Panc1 (cell line): ENCODE measurements at regions of chr19 and their contacts with region 1.

Region 1: DNA sequence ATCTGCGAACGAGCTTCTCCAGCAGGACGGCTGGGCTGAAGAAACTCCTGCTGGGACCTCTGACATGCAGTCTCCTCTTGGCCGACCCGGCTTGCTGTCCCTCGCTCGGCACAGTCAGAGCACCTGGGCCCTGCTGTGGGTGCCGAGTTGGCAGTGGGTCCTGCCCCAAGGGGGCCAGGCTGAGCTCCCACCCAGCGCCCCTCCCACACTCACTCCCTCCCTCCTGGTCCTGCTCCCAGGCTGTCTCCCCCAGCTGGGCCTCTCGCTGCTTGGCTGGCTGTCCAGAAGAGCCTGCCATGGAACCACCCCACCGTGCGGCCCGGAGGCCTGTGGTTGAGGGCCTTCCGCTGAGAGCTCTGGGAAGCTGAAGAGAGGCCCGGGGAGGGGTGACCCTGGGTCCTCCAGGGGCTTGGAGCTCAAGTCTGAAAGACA is 6.0 kb downstream of the AKT2 start:
- DNase-seq: no peak
- ATAC-seq: no peak
- H3K4me3 ChIP-seq: no peak overlapping the region
- H3K27ac ChIP-seq: no peak overlapping the region
- H3K4me1 ChIP-seq: peaks cover 67% of the 10 kb centered on the region
- H3K27me3 ChIP-seq: no peaks in the 10 kb centered on the region
- CTCF ChIP-seq: no peak

Region 2: GRCh38 chr19:39057615-39058014 is 1221.5 kb before region 1 on chr19:
- CTCF ChIA-PET with region 1: no interaction called
- POLR2A ChIA-PET with region 1: interaction called, 14 read pairs
- in situ Hi-C with region 1: no loop called
- intact Hi-C with region 1: no loop called
- DNase-seq: no peak
- ATAC-seq: no peak
- H3K4me3 ChIP-seq: no peak overlapping the region
- H3K27ac ChIP-seq: 0 out of 2 replicates have a peak overlapping the region, but pooled peaks have one; percentile 0
- H3K4me1 ChIP-seq: no peaks in the 10 kb centered on the region
- H3K27me3 ChIP-seq: no peaks in the 10 kb centered on the region
- CTCF ChIP-seq: no peak

Region 3: DNA sequence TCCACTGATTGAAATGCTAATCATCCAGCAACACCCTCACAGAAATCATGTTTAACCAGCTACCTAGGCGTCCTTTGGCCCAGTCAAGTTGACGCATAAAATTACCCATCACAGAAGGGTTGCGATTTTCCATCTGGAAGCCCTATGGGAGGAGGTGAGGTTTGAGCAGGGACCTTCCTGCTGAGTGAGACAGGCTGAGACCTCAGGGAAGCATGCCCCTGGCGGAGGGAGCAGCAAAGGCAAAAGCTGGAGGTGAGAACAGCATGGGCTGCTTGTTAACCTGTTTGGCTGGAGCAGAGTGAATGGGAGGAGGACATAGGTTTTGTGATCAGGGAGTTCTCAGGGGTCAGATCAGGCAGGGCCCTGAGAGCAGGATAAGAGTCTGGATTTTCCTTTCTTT is 68.2 kb before region 1 on chr19:
- CTCF ChIA-PET with region 1: no interaction called
- POLR2A ChIA-PET with region 1: interaction called, 11 read pairs
- in situ Hi-C with region 1: no loop called
- intact Hi-C with region 1: no loop called
- DNase-seq: no peak
- ATAC-seq: 0 out of 2 replicates have a peak, but pooled peaks have one; percentile 2
- H3K4me3 ChIP-seq: no peak overlapping the region
- H3K27ac ChIP-seq: no peak overlapping the region
- H3K4me1 ChIP-seq: no peaks in the 10 kb centered on the region
- H3K27me3 ChIP-seq: no peaks in the 10 kb centered on the region
- CTCF ChIP-seq: no peak

Region 4: DNA sequence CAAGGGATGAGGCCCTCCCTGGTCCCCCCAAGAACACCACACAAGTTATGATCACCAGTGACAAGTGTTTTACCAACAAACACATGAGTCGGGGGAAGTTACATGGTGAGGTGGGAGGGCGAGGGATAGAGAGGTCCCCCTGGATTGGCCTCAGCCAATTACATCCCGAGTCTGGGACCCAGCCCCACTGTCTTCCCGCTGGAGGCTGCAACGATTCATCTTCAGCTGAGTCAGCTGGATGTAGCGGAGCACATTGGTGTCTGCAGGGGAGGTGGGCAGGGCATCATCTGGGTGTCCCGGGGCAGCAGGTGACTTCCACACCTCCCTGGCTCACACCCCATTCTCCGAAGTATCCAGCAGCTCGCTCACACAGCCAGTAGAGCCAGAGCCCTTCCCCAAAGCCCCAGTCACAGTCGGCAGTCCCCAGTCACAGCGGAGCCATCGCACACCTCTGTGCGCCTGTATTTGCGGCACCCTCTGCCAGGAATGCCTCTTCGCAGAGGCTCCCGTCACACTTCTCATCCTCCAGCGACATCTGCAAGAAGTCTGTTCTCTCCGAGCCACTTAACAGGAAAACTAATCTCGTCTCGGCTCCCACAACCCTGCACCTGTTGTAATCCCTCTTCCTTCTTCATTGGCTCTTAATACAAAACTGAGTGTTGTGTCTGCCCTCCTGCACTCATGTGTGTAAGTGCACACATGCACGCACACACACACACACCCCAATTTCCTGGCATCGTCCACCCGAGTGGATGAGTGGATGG is 62.9 kb before region 1 on chr19:
- CTCF ChIA-PET with region 1: interaction called, 8 read pairs
- POLR2A ChIA-PET with region 1: interaction called, 18 read pairs
- in situ Hi-C with region 1: no loop called
- intact Hi-C with region 1: no loop called
- DNase-seq: no peak
- ATAC-seq: no peak
- H3K4me3 ChIP-seq: no peak overlapping the region
- H3K27ac ChIP-seq: no peak overlapping the region
- H3K4me1 ChIP-seq: peaks cover 27% of the 10 kb centered on the region
- H3K27me3 ChIP-seq: peaks cover 23% of the 10 kb centered on the region
- CTCF ChIP-seq: no peak

Region 5: DNA sequence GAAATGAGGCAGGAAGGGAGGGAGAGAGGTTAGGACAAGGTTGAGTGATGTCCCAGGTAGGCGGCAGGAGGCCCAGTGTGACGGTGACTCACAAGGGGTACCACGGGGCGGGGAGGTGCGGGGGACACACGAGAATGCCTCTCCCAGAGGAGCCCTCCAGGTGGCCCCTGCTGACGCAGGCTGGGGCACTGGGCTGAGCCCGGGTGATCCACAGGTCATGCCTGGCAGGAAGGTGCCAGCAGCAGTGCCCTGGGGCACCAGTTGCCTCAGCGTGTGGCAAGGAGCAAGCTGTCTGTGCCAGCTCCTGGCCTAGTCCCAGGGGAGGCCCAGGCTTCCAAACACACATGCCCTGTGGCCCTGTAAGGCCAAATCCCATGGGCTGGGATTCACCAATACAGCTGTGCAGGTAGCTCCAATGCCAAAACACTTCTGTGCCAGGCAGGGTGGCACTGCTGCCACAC is 22.0 kb before region 1 on chr19:
- CTCF ChIA-PET with region 1: interaction called, 5 read pairs
- POLR2A ChIA-PET with region 1: interaction called, 20 read pairs
- in situ Hi-C with region 1: no loop called
- intact Hi-C with region 1: no loop called
- DNase-seq: no peak
- ATAC-seq: peak; percentile 51
- H3K4me3 ChIP-seq: no peak overlapping the region
- H3K27ac ChIP-seq: no peak overlapping the region
- H3K4me1 ChIP-seq: peaks cover 12% of the 10 kb centered on the region
- H3K27me3 ChIP-seq: no peaks in the 10 kb centered on the region
- CTCF ChIP-seq: no peak

Region 6: GRCh38 chr19:40266119-40266518 is 13.0 kb before region 1 on chr19:
- CTCF ChIA-PET with region 1: interaction called, 5 read pairs
- POLR2A ChIA-PET with region 1: interaction called, 19 read pairs
- in situ Hi-C with region 1: no loop called
- intact Hi-C with region 1: no loop called
- DNase-seq: no peak
- ATAC-seq: no peak
- H3K4me3 ChIP-seq: no peak overlapping the region
- H3K27ac ChIP-seq: no peak overlapping the region
- H3K4me1 ChIP-seq: no peaks in the 10 kb centered on the region
- H3K27me3 ChIP-seq: no peaks in the 10 kb centered on the region
- CTCF ChIP-seq: no peak

Region 7: GRCh38 chr19:40472516-40472915 is 193.4 kb after region 1 on chr19:
- CTCF ChIA-PET with region 1: no interaction called
- POLR2A ChIA-PET with region 1: no interaction called
- in situ Hi-C with region 1: no loop called
- intact Hi-C with region 1: no loop called
- DNase-seq: no peak
- ATAC-seq: no peak
- H3K4me3 ChIP-seq: no peak overlapping the region
- H3K27ac ChIP-seq: no peak overlapping the region
- H3K4me1 ChIP-seq: no peaks in the 10 kb centered on the region
- H3K27me3 ChIP-seq: no peaks in the 10 kb centered on the region
- CTCF ChIP-seq: no peak

Region 8: DNA sequence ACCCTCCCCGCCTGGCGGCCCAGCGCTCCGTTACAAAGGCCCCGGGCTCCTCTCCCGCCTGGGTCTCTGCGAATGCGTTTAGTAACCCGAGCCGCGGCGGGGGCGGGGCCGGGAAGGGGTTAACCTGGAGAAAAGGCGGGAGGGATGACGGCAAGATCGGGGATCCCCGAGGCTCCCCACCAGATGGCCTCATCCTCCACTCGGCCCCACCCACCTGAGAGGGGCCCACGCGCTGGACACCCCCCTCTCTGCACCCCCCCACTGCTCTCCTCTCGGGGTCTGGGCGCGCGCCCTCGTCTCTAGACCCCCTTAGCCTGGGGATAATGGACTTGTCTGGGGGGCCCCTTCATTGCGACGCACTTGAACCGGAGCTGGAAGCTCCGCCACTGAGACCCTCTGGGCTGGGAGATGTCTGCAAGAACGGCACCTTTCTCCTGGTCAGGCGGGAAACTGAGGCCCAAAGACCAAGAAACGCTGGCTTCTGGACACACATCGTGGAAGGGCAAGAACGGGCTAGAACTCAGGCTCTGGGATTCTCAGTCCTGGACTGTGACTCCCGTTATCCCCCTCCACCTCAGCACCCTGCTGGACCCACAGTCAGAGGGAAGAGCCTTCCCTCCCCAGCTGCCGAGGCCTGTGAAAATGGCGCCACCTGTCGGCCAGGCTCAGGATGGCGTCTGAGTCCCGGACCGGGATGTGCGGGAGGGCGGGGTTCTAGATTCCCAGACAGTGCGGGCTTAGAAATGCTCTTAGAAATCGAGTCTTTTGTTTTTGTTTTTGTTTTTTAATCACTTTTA is 319.2 kb after region 1 on chr19:
- CTCF ChIA-PET with region 1: no interaction called
- POLR2A ChIA-PET with region 1: no interaction called
- in situ Hi-C with region 1: no loop called
- intact Hi-C with region 1: no loop called
- DNase-seq: no peak
- ATAC-seq: peak; percentile 77
- H3K4me3 ChIP-seq: peak overlapping the region; percentile 50 to 59
- H3K27ac ChIP-seq: peak overlapping the region; percentile 66; the same call in 1 of the 2 replicates
- H3K4me1 ChIP-seq: peaks cover 22% of the 10 kb centered on the region
- H3K27me3 ChIP-seq: no peaks in the 10 kb centered on the region
- CTCF ChIP-seq: peak; percentile 93